ENCODE measurements at regions of chr2 and their contacts with region 1.

Region 1: GRCh38 chr2:186485871-186486650 is at the start of gene ZC3H15:
- DNase-seq: peak; percentile 90 to 99 (median 95)
- ATAC-seq: peak; percentile 93
- H3K4me3 ChIP-seq: peak within 1 kb of the TSS; percentile 70
- H3K4me3 Mint-ChIP-seq: peak within 1 kb of the TSS; percentile 99
- H3K27ac ChIP-seq: peak within 1 kb of the TSS; percentile 87 to 96
- H3K27ac Mint-ChIP-seq: peak within 1 kb of the TSS; percentile 98
- H3K4me1 ChIP-seq: peaks cover 11% of the 10 kb centered on the region
- H3K4me1 Mint-ChIP-seq: peaks cover 78% of the 10 kb centered on the region
- H3K27me3 ChIP-seq: no peaks in the 10 kb centered on the region
- H3K27me3 Mint-ChIP-seq: no peaks in the 10 kb centered on the region
- CTCF ChIP-seq: no peak
- total RNA-seq, gene ZC3H15: 124 to 140 TPM

Region 2: GRCh38 chr2:186256540-186256939 is 229.5 kb before region 1 on chr2:
- CTCF ChIA-PET with region 1: no interaction called
- POLR2A ChIA-PET with region 1: no interaction called
- intact Hi-C with region 1: no loop called
- DNase-seq: peak in 1 of 14 experiments; percentile 2
- ATAC-seq: no peak
- H3K4me3 ChIP-seq: no peak overlapping the region
- H3K4me3 Mint-ChIP-seq: no peak overlapping the region
- H3K27ac ChIP-seq: no peak overlapping the region
- H3K27ac Mint-ChIP-seq: no peak overlapping the region
- H3K4me1 ChIP-seq: no peaks in the 10 kb centered on the region
- H3K4me1 Mint-ChIP-seq: no peaks in the 10 kb centered on the region
- H3K27me3 ChIP-seq: no peaks in the 10 kb centered on the region
- H3K27me3 Mint-ChIP-seq: no peaks in the 10 kb centered on the region
- CTCF ChIP-seq: no peak

Region 3: GRCh38 chr2:186589612-186590349 is 103.7 kb after region 1 on chr2 and contains the start of gene ITGAV:
- CTCF ChIA-PET with region 1: no interaction called
- POLR2A ChIA-PET with region 1: interaction called, 46 read pairs
- intact Hi-C with region 1: loop called in 1 of 2 experiments (anchors 2 kb)
- DNase-seq: peak; percentile 62 to 93 (median 76)
- ATAC-seq: peak; percentile 94
- H3K4me3 ChIP-seq: peak within 1 kb of the TSS; percentile 87
- H3K4me3 Mint-ChIP-seq: peak within 1 kb of the TSS; percentile 97
- H3K27ac ChIP-seq: peak within 1 kb of the TSS; percentile 53 to 56
- H3K27ac Mint-ChIP-seq: peak within 1 kb of the TSS; percentile 77
- H3K4me1 ChIP-seq: peaks cover 20% of the 10 kb centered on the region
- H3K4me1 Mint-ChIP-seq: peaks cover 32% of the 10 kb centered on the region
- H3K27me3 ChIP-seq: no peaks in the 10 kb centered on the region
- H3K27me3 Mint-ChIP-seq: no peaks in the 10 kb centered on the region
- CTCF ChIP-seq: no peak
- total RNA-seq, gene ITGAV: 2.9 to 3.7 TPM

Measured in CD4-positive, alpha-beta T cell (primary cell).